Prostate gland (tissue), 2 donors: ENCODE measurements at regions of chr2 and their contacts with region 1.

Region 1: GRCh38 chr2:203814661-203815540 is 52.7 kb upstream of the CTLA4 start:
- DNase-seq: peak; percentile 40
- H3K4me3 ChIP-seq: no peak overlapping the region
- H3K27ac ChIP-seq: no peak overlapping the region
- H3K4me1 ChIP-seq: no peaks in the 10 kb centered on the region
- H3K27me3 ChIP-seq: no peaks in the 10 kb centered on the region
- CTCF ChIP-seq: peak; percentile 22 to 83 (median 72)
- POLR2A ChIP-seq: no peak

Region 2: DNA sequence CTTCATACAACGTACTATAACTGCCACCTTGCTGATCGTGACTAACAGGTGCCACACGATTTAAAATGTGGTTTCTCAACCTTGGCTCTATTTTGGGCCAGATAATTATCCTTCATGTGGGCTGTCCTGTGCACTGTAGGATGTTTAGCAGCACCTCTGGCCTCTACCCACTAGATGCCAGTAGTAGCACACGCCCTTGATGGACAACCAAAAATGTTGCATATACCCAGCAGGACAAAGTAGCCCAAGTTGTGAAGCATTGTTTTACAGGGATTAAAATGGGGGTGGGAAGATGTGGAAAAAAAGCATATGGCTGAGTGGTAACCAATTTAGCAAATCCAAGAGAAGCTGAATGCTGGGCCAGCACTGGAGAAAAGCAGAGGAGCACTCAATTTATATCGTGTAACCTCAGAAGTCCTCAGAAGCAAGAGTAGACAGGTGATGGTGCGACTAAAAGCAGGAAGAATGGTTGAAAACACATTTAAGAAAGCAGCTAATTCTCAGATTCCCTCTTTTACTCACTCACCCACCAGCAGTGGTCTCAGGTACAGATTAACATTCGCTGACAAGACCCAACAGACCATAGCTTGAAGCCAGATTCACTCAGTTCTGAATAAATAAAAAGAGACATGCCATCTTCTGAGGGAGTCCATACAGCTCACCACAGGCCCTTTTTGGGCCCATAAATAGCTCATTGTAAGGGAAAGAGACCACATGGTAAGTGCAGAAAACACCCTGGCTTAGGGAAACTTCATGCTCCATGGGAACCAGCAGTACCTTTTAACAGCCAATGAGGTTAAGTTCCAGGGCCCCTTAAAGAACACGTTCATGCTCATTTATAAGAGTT is 330.4 kb before region 1 on chr2:
- intact Hi-C with region 1: loop called (anchors 5 kb)
- DNase-seq: peak; percentile 21
- H3K4me3 ChIP-seq: no peak overlapping the region
- H3K27ac ChIP-seq: no peak overlapping the region
- H3K4me1 ChIP-seq: no peaks in the 10 kb centered on the region
- H3K27me3 ChIP-seq: no peaks in the 10 kb centered on the region
- CTCF ChIP-seq: peak in 3 of 4 experiments; percentile 43 to 64 (median 53)
- POLR2A ChIP-seq: no peak

Region 3: GRCh38 chr2:203909261-203909967 is 94.5 kb after region 1 on chr2:
- intact Hi-C with region 1: loop called (anchors 10 kb)
- DNase-seq: no peak
- H3K4me3 ChIP-seq: no peak overlapping the region
- H3K27ac ChIP-seq: no peak overlapping the region
- H3K4me1 ChIP-seq: no peaks in the 10 kb centered on the region
- H3K27me3 ChIP-seq: no peaks in the 10 kb centered on the region
- CTCF ChIP-seq: peak in 3 of 4 experiments; percentile 51 to 65 (median 61)
- POLR2A ChIP-seq: no peak